Tibial artery (tissue), 4 donors: ENCODE measurements at regions of chr17 and their contacts with region 1.

Region 1: DNA sequence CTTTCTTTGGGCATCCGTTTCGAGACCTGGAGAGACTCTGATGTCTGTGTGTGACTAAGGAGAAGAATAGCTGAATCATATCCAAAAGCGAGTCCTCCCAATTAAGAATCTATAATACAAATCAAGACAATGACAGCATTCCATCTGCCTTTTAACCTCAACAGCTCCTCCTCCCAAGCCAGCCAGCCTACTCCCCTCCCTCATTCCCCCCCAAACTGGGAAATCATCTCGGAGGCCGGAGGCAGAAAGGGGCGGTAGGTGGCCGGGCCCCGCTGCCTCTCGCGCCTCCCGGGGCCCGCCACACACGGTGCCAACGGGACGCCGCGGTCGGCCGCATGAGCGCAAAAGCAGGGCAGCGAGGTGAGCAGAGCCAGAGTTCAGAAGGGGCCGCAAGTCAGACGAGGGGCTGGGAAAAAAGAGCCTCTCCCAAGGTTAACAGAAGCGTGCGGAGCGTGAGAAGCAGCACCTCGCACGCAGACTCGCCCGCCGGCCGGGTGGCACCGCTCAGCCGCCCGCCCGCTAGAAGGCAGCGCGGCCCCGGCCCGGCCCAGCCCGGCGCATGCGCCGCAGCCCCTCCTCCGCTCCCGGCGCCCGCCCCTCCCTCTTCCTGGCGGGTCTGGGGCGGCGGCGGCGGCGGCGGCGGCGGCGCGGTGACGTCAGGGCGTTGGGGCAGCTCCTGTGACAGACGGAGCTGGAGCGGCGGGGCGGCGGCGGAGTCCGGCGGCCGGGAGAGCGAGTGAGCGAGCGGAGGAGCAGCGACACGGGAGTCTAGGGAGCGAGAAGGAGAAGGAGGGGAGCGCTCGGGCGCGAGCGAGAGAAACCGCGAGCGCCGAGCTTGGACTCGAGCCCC is at the start of gene PAFAH1B1:
- DNase-seq: peak; percentile 87 to 95
- H3K4me3 ChIP-seq: peak within 1 kb of the TSS; percentile 87 to 98
- H3K27ac ChIP-seq: peak within 1 kb of the TSS; percentile 97 to 100
- H3K4me1 ChIP-seq: peaks cover 0 to 41% (median 25%) of the 10 kb centered on the region in 4 donors
- H3K27me3 ChIP-seq: no peaks in the 10 kb centered on the region
- CTCF ChIP-seq: no peak

Region 2: DNA sequence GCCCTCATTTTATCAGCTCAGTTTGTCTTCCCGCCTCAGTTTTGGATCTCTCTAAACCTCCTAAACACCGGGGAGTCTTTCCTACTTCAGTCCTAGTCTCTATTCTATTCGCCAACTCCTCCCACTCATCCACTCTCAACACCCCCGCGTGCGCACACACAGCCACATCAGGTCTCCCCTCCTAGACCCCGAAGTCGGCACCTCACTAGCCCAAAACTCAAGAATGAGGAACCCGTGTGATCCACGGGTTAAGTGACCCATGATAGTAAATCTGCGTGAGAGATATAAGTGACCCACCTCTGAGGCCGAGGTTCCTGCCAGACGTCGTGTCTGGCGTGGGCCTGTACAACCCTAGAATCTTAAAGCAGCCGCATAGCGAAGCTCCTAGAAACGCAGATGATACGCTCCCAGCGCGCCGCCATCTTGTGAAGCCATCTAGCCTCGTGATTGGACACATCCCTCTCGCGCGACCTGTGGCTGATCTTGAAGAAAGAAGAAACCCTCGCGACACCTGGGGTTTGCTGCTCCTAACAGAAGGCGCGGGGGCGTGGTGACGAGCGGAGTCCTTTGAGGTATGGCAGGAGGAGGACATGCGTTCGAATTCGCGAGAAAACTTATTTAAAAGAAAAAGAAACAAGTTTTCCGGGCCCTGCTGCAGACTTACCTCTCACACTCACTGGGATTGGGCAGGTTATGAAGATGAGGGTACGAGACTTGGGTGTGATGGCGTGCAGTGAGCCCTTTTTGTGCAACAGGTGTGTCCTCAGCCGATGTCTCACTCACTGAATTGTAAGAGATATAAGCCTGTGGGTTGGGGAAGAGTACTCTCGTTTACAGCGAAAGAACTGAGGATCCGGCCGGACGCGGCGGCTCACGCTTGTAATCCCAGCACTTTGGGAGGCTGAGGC is 81.5 kb before region 1 on chr17 and contains the start of gene METTL16:
- intact Hi-C with region 1: loop called (anchors 5 kb)
- DNase-seq: peak; percentile 98 to 99
- H3K4me3 ChIP-seq: peak within 1 kb of the TSS; percentile 68 to 78
- H3K27ac ChIP-seq: peak within 1 kb of the TSS; percentile 79 to 93
- H3K4me1 ChIP-seq: peaks cover 0 to 34% (median 3%) of the 10 kb centered on the region in 4 donors
- H3K27me3 ChIP-seq: no peaks in the 10 kb centered on the region
- CTCF ChIP-seq: no peak

Region 3: GRCh38 chr17:2542456-2542855 is 50.7 kb before region 1 on chr17:
- intact Hi-C with region 1: no loop called
- DNase-seq: no peak
- H3K4me3 ChIP-seq: no peak overlapping the region
- H3K27ac ChIP-seq: no peak overlapping the region
- H3K4me1 ChIP-seq: no peaks in the 10 kb centered on the region
- H3K27me3 ChIP-seq: no peaks in the 10 kb centered on the region
- CTCF ChIP-seq: no peak

Region 4: GRCh38 chr17:2688351-2689342 is 95.5 kb after region 1 on chr17:
- intact Hi-C with region 1: loop called (anchors 5 kb)
- DNase-seq: peak in 1 of 2 donors; percentile 22
- H3K4me3 ChIP-seq: no peak overlapping the region
- H3K27ac ChIP-seq: peak overlapping the region in 1 of 2 donors; percentile 54
- H3K4me1 ChIP-seq: peaks cover 0 to 37% (median 16%) of the 10 kb centered on the region in 4 donors
- H3K27me3 ChIP-seq: no peaks in the 10 kb centered on the region
- CTCF ChIP-seq: no peak